GM12878 (cell line): ENCODE measurements at regions of chr9 and their contacts with region 1.

Region 1: GRCh38 chr9:110152704-110153374 is 55.1 kb downstream of the C9orf152 start:
- DNase-seq: no peak
- ATAC-seq: peak; percentile 23
- H3K4me3 ChIP-seq: 0 out of 2 replicates have a peak overlapping the region, but pooled peaks have one; percentile 17
- H3K27ac ChIP-seq: no peak overlapping the region
- H3K4me1 ChIP-seq: peaks cover 57% of the 10 kb centered on the region
- H3K27me3 ChIP-seq: no peaks in the 10 kb centered on the region
- CTCF ChIP-seq: peak; percentile 68 to 83 (median 78); a peak in 5 of 6 replicates
- EP300 ChIP-seq: no peak
- POLR2A ChIP-seq: no peak; the same call in none of the 2 replicates
- RAD21 ChIP-seq: peak; percentile 96

Region 2: GRCh38 chr9:109730228-109730627 is 422.6 kb before region 1 on chr9:
- CTCF ChIA-PET with region 1: no interaction called
- POLR2A ChIA-PET with region 1: no interaction called
- RAD21 ChIA-PET with region 1: no interaction called
- SMC1A ChIA-PET with region 1: no interaction called
- in situ Hi-C with region 1: no loop called
- intact Hi-C with region 1: no loop called
- DNase-seq: no peak
- ATAC-seq: no peak
- H3K4me3 ChIP-seq: no peak overlapping the region
- H3K27ac ChIP-seq: no peak overlapping the region
- H3K4me1 ChIP-seq: no peaks in the 10 kb centered on the region
- H3K27me3 ChIP-seq: no peaks in the 10 kb centered on the region; a peak in 1 of 4 replicates
- CTCF ChIP-seq: no peak
- EP300 ChIP-seq: no peak
- POLR2A ChIP-seq: no peak
- RAD21 ChIP-seq: no peak

Region 3: GRCh38 chr9:109880277-109881169 is 272.3 kb before region 1 on chr9:
- CTCF ChIA-PET with region 1: interaction called, 11 read pairs
- POLR2A ChIA-PET with region 1: no interaction called
- RAD21 ChIA-PET with region 1: interaction called, 3 read pairs
- SMC1A ChIA-PET with region 1: interaction called, 3 read pairs
- in situ Hi-C with region 1: no loop called
- intact Hi-C with region 1: no loop called
- DNase-seq: no peak
- ATAC-seq: peak; percentile 96
- H3K4me3 ChIP-seq: no peak overlapping the region
- H3K27ac ChIP-seq: no peak overlapping the region
- H3K4me1 ChIP-seq: no peaks in the 10 kb centered on the region
- H3K27me3 ChIP-seq: 0 out of 4 replicates have a peak, but pooled peaks cover 0 to 3% of the 10 kb centered on the region in 2 experiments
- CTCF ChIP-seq: peak; percentile 57 to 76 (median 75)
- EP300 ChIP-seq: no peak
- POLR2A ChIP-seq: no peak
- RAD21 ChIP-seq: peak; percentile 43; the same call in 1 of the 2 replicates

Region 4: DNA sequence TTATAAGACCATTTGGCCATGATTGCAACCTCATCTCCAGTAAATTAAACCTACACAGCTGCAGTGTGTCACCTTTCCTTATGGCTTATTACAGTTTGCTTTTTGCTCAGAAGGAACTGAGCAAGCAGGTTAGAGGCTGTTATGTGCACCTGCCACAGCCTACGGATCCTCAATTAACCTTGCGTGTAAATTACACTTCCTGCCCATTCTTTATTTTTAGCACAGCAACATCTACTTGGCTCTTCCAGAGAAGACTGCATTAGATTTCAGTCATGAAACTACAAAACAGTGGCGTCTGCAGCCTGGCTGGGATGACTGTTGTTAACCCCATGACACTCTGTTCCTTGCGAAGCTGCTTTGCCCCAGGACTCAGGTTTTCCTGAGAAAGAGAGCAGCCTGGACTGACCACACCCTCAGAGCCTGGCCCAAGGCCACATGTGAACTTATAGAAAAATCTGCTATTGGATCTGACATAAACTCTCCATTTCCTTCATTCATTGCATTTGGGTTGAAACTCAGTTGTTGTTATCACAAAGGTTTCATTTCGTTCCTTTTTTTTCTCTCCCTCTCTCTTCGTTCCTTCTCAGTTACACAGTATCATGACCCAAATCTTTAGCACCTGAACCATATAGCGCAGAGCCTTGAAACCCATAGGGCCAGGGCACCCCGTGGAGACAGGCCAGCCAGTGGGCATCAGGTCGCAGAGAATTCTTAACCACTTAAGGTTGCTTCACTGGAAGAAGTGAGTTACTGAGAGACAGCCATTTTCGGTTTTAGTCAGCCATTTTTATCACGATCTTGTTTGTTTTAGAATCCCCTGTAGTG is 234.3 kb before region 1 on chr9:
- CTCF ChIA-PET with region 1: interaction called, 597 read pairs
- POLR2A ChIA-PET with region 1: interaction called, 4 read pairs
- RAD21 ChIA-PET with region 1: interaction called, 14 read pairs
- SMC1A ChIA-PET with region 1: interaction called, 406 read pairs
- in situ Hi-C with region 1: no loop called
- intact Hi-C with region 1: no loop called
- DNase-seq: peak; percentile 80
- ATAC-seq: peak; percentile 73
- H3K4me3 ChIP-seq: peak overlapping the region; percentile 37; the same call in 1 of the 2 replicates
- H3K27ac ChIP-seq: peak overlapping the region; percentile 94
- H3K4me1 ChIP-seq: peaks cover 55% of the 10 kb centered on the region
- H3K27me3 ChIP-seq: no peaks in the 10 kb centered on the region
- CTCF ChIP-seq: no peak
- EP300 ChIP-seq: peak; percentile 71 to 92
- POLR2A ChIP-seq: no peak; the same call in none of the 2 replicates
- RAD21 ChIP-seq: peak; percentile 38; the same call in 1 of the 2 replicates

Region 5: DNA sequence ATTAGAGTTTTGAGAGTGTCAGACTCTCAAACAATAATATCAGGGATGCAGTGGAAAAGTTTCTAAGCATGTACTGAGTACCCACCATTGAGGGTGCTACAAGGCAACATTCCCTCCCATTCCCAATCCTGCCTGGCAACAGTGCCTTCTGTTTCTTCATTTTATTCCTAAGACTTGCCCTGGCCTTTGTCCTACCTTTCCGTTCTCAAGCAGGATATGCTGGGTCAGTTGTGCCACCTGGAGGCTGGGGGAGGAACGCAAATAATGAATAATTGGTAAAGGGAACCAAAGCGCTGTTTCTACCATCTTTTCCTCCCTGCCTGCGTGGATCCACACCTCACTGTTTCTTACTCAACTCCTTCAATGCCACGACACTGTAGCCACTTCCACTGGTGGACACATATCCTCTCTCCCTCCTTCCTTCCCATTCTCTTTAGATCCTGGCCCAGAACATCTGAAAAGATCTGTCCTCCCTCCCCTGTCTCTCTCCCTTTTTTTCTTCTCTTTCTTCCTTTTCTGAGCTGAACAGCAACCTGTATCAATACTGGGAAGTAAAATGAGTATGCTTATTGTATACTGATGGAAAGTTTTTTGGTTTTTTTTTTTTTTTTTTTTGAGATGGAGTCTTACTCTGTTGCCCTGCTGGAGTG is 94.4 kb before region 1 on chr9:
- CTCF ChIA-PET with region 1: interaction called, 237 read pairs
- POLR2A ChIA-PET with region 1: interaction called, 27 read pairs
- RAD21 ChIA-PET with region 1: interaction called, 84 read pairs
- SMC1A ChIA-PET with region 1: interaction called, 126 read pairs
- in situ Hi-C with region 1: loop called (anchors 10 kb)
- intact Hi-C with region 1: loop called (anchors 2 kb)
- DNase-seq: no peak
- ATAC-seq: peak; percentile 83
- H3K4me3 ChIP-seq: peak overlapping the region; percentile 30; the same call in 1 of the 2 replicates
- H3K27ac ChIP-seq: no peak overlapping the region; the same call in 1 of the 2 replicates
- H3K4me1 ChIP-seq: peaks cover 19% of the 10 kb centered on the region
- H3K27me3 ChIP-seq: no peaks in the 10 kb centered on the region
- CTCF ChIP-seq: peak; percentile 63 to 74 (median 72)
- EP300 ChIP-seq: no peak
- POLR2A ChIP-seq: no peak
- RAD21 ChIP-seq: peak; percentile 98

Region 6: GRCh38 chr9:110125207-110125751 is 27.6 kb before region 1 on chr9:
- CTCF ChIA-PET with region 1: interaction called, 58 read pairs
- POLR2A ChIA-PET with region 1: interaction called, 262 read pairs
- RAD21 ChIA-PET with region 1: interaction called, 396 read pairs
- SMC1A ChIA-PET with region 1: interaction called, 460 read pairs
- in situ Hi-C with region 1: no loop called
- intact Hi-C with region 1: no loop called
- DNase-seq: no peak
- ATAC-seq: no peak
- H3K4me3 ChIP-seq: no peak overlapping the region
- H3K27ac ChIP-seq: peak overlapping the region; percentile 29
- H3K4me1 ChIP-seq: peaks cover 58% of the 10 kb centered on the region
- H3K27me3 ChIP-seq: no peaks in the 10 kb centered on the region
- CTCF ChIP-seq: no peak
- EP300 ChIP-seq: no peak
- POLR2A ChIP-seq: no peak
- RAD21 ChIP-seq: no peak

Region 7: GRCh38 chr9:110303133-110303532 is 150.3 kb after region 1 on chr9:
- CTCF ChIA-PET with region 1: no interaction called
- POLR2A ChIA-PET with region 1: no interaction called
- RAD21 ChIA-PET with region 1: no interaction called
- SMC1A ChIA-PET with region 1: no interaction called
- in situ Hi-C with region 1: no loop called
- intact Hi-C with region 1: no loop called
- DNase-seq: no peak
- ATAC-seq: no peak
- H3K4me3 ChIP-seq: no peak overlapping the region
- H3K27ac ChIP-seq: no peak overlapping the region
- H3K4me1 ChIP-seq: peaks cover 1% of the 10 kb centered on the region; the same call in 1 of the 2 replicates
- H3K27me3 ChIP-seq: no peaks in the 10 kb centered on the region
- CTCF ChIP-seq: no peak
- EP300 ChIP-seq: no peak
- POLR2A ChIP-seq: no peak
- RAD21 ChIP-seq: no peak